ENCODE measurements at regions of chr19 and their contacts with region 1.

Region 1: DNA sequence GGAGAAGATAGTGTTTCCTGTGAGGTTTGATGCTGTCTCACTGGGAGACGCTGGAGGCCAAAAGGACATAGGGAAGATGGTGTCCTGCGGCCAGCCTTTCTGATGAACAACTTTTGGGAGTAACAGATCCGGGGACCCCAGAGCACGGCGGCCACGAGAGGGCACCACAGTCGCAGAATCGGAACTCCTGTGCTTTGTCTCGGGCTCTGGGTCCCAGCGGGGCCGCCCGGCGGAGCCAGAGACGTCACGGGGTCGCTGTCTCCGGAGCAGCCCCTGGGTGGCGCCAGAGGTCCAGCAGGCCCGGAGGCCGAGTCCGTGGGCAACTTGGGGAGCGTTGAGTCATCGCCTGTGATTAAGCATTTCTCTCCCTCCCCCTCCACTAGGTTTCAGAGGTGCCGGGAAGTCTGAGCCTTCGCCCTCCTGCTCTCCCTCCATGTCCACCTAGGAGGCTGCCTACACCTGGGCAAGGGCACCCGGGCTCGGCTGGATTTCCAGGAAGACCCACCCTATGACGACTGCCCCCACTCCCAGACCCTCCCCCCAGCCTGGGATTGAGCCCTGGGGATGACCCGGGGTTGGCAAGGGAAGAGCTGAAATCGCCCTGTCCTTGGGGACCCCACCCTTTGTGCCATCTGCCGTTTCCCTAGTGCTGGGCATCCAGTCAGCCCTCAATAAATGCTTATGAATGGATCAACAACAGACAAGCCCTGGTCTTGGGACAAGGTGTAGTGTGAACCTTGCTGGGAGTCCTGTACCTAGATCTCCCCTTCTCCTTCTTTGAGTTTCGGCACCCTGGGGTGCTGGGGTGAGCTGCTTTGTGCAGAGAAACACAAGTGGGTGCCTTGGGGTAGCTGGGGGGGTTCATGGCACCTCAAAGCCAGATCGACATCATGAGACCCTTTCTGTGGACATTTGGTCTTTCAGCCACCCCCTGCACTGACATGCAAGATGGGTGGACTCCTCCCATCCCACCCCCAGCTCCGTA is 3.4 kb downstream of the NANOS3 start:
- DNase-seq: peak; percentile 99
- H3K4me3 Mint-ChIP-seq: peak overlapping the region; percentile 45
- H3K27ac Mint-ChIP-seq: peak overlapping the region; percentile 86
- H3K4me1 Mint-ChIP-seq: peaks cover 26% of the 10 kb centered on the region
- H3K27me3 Mint-ChIP-seq: no peaks in the 10 kb centered on the region

Region 2: GRCh38 chr19:13892862-13893261 is 12.5 kb after region 1 on chr19:
- CTCF ChIA-PET with region 1: no interaction called
- POLR2A ChIA-PET with region 1: no interaction called
- intact Hi-C with region 1: no loop called
- DNase-seq: no peak
- H3K4me3 Mint-ChIP-seq: no peak overlapping the region
- H3K27ac Mint-ChIP-seq: no peak overlapping the region
- H3K4me1 Mint-ChIP-seq: no peaks in the 10 kb centered on the region
- H3K27me3 Mint-ChIP-seq: no peaks in the 10 kb centered on the region

Region 3: DNA sequence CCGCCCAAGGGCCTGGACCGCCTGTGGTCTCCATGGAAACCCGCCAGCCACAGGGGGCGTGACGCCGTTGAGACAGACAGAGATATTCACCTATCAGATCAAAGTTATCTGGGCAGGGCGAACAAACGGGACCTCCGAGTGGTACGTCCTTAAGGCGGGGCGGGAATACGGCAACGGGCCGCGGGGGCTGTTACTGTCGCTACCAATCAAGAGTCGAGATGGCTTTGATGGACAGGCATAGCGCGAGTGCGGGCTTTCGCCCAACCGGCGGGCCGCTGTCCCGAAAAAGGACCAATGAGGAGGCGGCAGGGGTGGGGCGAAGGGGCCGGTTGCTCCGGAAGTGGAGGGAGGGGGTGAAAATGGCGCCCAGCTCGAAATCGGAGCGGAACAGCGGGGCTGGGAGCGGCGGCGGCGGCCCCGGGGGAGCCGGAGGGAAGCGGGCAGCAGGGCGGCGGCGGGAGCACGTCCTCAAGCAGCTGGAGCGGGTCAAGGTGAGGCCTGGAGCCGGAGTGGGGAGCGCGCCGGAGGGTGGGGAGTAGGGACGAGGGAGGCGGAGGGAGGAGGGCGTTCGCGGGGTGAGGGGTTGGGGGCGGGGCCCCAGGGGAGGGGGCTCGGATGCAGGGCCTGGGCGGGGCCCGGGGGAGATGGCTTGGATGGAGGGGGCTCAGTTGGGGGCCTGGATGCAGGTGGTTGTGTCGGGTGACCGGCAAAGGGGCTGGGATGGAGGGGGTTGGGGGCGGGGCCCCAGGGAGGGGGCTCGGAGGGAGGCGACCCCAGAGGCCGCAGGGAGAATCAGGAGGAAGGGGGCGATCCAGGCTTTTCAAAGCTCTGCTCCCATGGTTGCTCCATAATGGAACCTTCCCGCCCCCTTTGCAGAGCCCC is 72.0 kb after region 1 on chr19 and contains the start of gene DCAF15:
- CTCF ChIA-PET with region 1: interaction called, 20 read pairs
- POLR2A ChIA-PET with region 1: no interaction called
- intact Hi-C with region 1: loop called (anchors 1 kb)
- DNase-seq: peak; percentile 99
- H3K4me3 Mint-ChIP-seq: peak within 1 kb of the TSS; percentile 95
- H3K27ac Mint-ChIP-seq: peak within 1 kb of the TSS; percentile 85
- H3K4me1 Mint-ChIP-seq: peaks cover 17% of the 10 kb centered on the region
- H3K27me3 Mint-ChIP-seq: no peaks in the 10 kb centered on the region
- total RNA-seq, gene DCAF15: 67.0 to 72.0 TPM

Region 4: DNA sequence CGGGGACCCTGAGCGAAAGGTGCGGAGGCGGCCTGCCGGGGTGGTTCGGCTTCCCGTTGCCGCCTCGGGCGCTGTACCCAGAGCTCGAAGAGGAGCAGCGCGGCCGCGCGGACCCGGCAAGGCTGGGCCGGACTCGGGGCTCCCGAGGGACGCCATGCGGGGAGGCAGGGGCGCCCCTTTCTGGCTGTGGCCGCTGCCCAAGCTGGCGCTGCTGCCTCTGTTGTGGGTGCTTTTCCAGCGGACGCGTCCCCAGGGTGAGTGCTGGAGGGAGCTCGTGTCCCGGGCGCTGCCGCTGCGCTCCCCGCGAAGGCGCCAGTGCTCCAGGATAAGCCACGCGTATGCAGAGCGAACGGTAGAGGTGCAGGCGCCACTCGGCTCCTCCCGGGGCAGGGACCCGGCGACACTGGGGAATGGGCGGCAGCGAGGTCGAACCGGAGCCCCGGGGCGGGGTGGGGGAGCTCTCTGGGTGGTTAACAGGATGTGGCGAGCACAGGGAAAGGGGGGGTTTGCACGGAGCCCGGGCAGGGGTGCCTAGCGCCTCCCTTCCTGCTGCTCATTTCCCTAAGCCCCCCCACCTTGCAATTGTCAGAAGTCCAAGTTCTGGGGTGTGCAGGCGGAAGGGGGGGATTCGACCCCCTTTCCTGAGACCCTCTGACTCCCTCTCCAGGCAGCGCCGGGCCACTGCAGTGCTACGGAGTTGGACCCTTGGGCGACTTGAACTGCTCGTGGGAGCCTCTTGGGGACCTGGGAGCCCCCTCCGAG is 151.5 kb after region 1 on chr19 and contains the start of gene IL27RA:
- CTCF ChIA-PET with region 1: interaction called, 11 read pairs
- POLR2A ChIA-PET with region 1: interaction called, 3 read pairs
- intact Hi-C with region 1: loop called (anchors 5 kb)
- DNase-seq: peak; percentile 86
- H3K4me3 Mint-ChIP-seq: peak within 1 kb of the TSS; percentile 93
- H3K27ac Mint-ChIP-seq: peak within 1 kb of the TSS; percentile 91
- H3K4me1 Mint-ChIP-seq: peaks cover 21% of the 10 kb centered on the region
- H3K27me3 Mint-ChIP-seq: no peaks in the 10 kb centered on the region
- total RNA-seq, gene IL27RA: 61.9 to 62.0 TPM

Region 5: GRCh38 chr19:14059093-14059480 is 178.7 kb after region 1 on chr19:
- CTCF ChIA-PET with region 1: interaction called, 28 read pairs
- POLR2A ChIA-PET with region 1: no interaction called
- intact Hi-C with region 1: no loop called
- DNase-seq: peak; percentile 62
- H3K4me3 Mint-ChIP-seq: no peak overlapping the region
- H3K27ac Mint-ChIP-seq: no peak overlapping the region
- H3K4me1 Mint-ChIP-seq: peaks cover 15% of the 10 kb centered on the region
- H3K27me3 Mint-ChIP-seq: peaks cover 15% of the 10 kb centered on the region

Region 6: GRCh38 chr19:14117668-14118164 is 237.4 kb after region 1 on chr19 and contains the start of gene PRKACA:
- CTCF ChIA-PET with region 1: interaction called, 20 read pairs
- POLR2A ChIA-PET with region 1: no interaction called
- intact Hi-C with region 1: loop called (anchors 1 kb)
- DNase-seq: peak; percentile 99
- H3K4me3 Mint-ChIP-seq: peak within 1 kb of the TSS; percentile 81
- H3K27ac Mint-ChIP-seq: peak within 1 kb of the TSS; percentile 76
- H3K4me1 Mint-ChIP-seq: peaks cover 37% of the 10 kb centered on the region
- H3K27me3 Mint-ChIP-seq: no peaks in the 10 kb centered on the region
- total RNA-seq, gene PRKACA: 64.3 to 65.6 TPM

Region 7: GRCh38 chr19:14718522-14719113 is 838.3 kb after region 1 on chr19:
- CTCF ChIA-PET with region 1: no interaction called
- POLR2A ChIA-PET with region 1: no interaction called
- intact Hi-C with region 1: no loop called
- DNase-seq: no peak
- H3K4me3 Mint-ChIP-seq: no peak overlapping the region
- H3K27ac Mint-ChIP-seq: no peak overlapping the region
- H3K4me1 Mint-ChIP-seq: no peaks in the 10 kb centered on the region
- H3K27me3 Mint-ChIP-seq: no peaks in the 10 kb centered on the region